ENCODE measurements at regions of chr1 and their contacts with region 1.

Region 1: DNA sequence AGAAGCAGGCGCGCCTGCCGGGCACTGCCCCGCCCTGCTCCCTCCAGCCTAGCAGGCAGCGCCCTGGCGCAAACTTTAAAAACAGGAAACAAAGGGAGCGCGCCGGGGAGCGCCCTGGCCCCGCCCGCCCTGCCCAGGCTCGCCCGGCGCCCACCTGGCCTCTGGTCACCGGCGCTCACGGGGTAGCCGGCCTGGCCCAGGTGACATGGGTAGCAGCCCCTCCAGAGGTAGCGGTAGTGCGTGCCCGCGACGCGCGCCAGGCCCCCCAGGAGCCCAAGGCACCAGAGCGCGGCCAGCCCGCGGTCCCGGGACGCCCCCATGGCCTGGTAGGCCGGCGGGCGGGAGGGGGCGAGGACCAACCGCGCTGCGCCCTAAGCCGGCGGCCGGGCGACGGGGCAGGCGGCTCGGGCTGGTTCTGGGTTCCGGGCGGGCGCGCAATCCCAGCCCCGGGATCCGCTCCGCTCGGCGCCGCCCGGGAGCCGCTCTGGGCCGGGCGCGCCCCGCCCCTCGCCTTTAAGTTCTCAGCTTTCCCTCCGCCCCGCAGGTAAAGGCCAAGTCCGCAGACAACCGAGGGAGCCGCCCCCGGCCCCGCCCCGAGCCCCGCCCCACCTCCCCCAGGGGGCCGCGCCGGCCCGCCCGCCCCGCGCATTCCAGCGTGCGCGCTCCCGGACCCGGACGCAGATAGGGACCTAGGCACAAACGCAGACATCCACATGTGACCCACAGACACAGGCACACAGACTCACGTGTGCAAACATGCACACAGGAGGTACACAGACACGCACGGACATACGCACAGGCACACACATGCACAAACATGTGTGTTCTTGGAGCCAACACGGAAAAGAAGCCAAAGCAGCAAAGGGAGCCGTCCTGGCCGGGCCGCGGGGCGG is 76.7 kb downstream of the ARHGEF16 start:
- DNase-seq: peak; percentile 69
- H3K4me3 ChIP-seq: peak overlapping the region; percentile 40 to 57 (median 49)
- H3K27ac ChIP-seq: no peak overlapping the region
- H3K4me1 ChIP-seq: peaks cover 12% of the 10 kb centered on the region
- H3K27me3 ChIP-seq: no peaks in the 10 kb centered on the region
- CTCF ChIP-seq: no peak

Region 2: GRCh38 chr1:3384407-3384806 is 146.8 kb before region 1 on chr1:
- CTCF ChIA-PET with region 1: no interaction called
- dilution Hi-C with region 1: no loop called
- in situ Hi-C with region 1: no loop called
- intact Hi-C with region 1: no loop called
- DNase-seq: no peak
- H3K4me3 ChIP-seq: no peak overlapping the region
- H3K27ac ChIP-seq: no peak overlapping the region
- H3K4me1 ChIP-seq: no peaks in the 10 kb centered on the region
- H3K27me3 ChIP-seq: no peaks in the 10 kb centered on the region
- CTCF ChIP-seq: no peak

Region 3: GRCh38 chr1:3553166-3553939 is 22.2 kb after region 1 on chr1:
- CTCF ChIA-PET with region 1: no interaction called
- dilution Hi-C with region 1: no loop called
- in situ Hi-C with region 1: no loop called
- intact Hi-C with region 1: loop called (anchors 1 kb)
- DNase-seq: peak; percentile 81
- H3K4me3 ChIP-seq: peak overlapping the region in 1 of 3 experiments; percentile 10
- H3K27ac ChIP-seq: no peak overlapping the region
- H3K4me1 ChIP-seq: peaks cover 30% of the 10 kb centered on the region
- H3K27me3 ChIP-seq: peaks cover 14% of the 10 kb centered on the region
- CTCF ChIP-seq: no peak

Measured in mammary epithelial cell (primary cell).